Transverse colon (tissue), 4 donors: ENCODE measurements at regions of chr2 and their contacts with region 1.

Region 1: DNA sequence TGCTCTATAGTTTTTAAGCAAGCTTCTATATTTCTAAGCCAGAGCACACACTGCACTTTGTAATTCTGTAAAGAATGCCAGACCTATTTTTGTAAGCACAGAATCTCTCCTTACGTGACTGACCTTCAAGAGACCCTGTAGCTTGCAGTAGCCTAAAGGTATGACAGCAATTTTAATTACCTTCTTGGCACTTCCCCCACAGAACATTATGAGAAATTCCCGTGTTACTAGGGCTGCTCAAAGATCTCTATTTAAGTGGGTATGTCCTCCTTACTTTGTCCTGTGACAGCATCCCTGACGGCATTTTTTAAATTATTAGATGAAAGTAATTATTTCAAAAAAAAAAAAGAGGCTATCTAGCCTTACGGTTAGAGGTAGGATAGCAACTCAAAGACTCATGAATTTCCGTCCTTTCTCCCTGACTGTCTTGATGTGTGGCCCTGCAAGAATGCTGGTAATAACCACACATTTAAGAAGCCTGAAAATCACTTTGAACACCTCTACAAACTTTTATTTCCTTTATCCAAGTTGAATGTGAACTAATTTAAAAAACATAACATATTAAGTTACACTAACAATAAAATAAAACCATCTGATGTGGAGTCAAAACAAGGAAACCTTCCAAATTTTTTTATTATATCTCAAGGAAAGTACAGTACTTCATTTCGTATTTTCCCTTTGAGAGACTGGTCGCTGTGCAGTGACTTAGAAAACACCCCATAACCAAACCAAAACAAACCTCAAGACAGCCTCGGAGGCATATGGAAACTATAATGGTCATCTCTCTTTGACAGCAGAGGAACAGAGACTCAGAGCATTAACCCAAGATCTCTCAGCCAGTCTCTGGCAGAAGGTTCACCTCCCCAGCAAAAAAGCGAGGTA is 54.9 kb downstream of the THUMPD2 start:
- DNase-seq: no peak
- H3K4me3 ChIP-seq: no peak overlapping the region
- H3K27ac ChIP-seq: no peak overlapping the region
- H3K4me1 ChIP-seq: no peaks in the 10 kb centered on the region
- H3K27me3 ChIP-seq: no peaks in the 10 kb centered on the region
- CTCF ChIP-seq: no peak
- EP300 ChIP-seq: no peak
- POLR2A ChIP-seq: no peak

Region 2: DNA sequence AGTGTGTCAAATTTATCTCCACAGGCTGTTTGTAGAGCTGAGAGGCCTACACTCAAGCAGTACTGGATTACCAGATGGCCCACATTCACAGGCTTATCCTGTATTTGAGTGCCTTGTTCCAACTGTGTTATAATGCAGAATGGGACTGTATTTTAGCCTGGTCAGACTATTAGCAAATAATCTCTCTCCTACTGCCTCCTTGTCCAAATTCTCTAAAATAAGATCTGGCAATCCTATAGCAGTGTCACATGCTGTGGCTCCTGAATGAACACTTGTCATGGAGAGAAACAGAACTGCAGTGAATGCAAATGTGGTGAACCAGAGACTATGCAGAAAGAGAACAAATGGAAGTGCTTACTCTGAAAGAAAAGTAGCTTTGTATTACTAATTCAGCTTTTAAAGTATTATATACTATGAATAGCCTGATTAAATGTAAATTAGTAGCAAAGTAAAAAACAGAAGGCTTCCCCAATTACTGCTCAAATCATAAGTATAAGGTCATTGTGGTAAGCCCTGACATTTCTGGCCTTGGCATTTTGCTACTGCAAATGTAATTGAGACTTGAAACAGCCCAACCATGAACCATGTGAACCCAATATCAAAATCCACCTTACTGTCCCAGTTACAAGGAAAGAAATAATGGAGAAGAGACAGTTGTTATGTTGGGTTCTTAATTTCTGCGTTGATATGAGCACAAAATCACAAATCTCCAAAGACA is 367.1 kb before region 1 on chr2:
- in situ Hi-C with region 1: loop called in 1 of 4 experiments (anchors 25 kb)
- intact Hi-C with region 1: no loop called
- DNase-seq: no peak
- H3K4me3 ChIP-seq: no peak overlapping the region
- H3K27ac ChIP-seq: no peak overlapping the region
- H3K4me1 ChIP-seq: no peaks in the 10 kb centered on the region
- H3K27me3 ChIP-seq: no peaks in the 10 kb centered on the region
- CTCF ChIP-seq: no peak
- EP300 ChIP-seq: no peak
- POLR2A ChIP-seq: no peak

Region 3: GRCh38 chr2:39631718-39632117 is 92.5 kb before region 1 on chr2:
- in situ Hi-C with region 1: no loop called
- intact Hi-C with region 1: no loop called
- DNase-seq: no peak
- H3K4me3 ChIP-seq: no peak overlapping the region
- H3K27ac ChIP-seq: no peak overlapping the region
- H3K4me1 ChIP-seq: no peaks in the 10 kb centered on the region
- H3K27me3 ChIP-seq: no peaks in the 10 kb centered on the region
- CTCF ChIP-seq: no peak
- EP300 ChIP-seq: no peak
- POLR2A ChIP-seq: no peak